HepG2 (cell line): ENCODE measurements at regions of chr1 and their contacts with region 1.

Region 1: GRCh38 chr1:22052115-22053016 is at the start of gene CDC42:
- DNase-seq: peak; percentile 91
- ATAC-seq: peak; percentile 94
- H3K4me3 ChIP-seq: peak within 1 kb of the TSS; percentile 81 to 90 (median 90)
- H3K27ac ChIP-seq: peak within 1 kb of the TSS; percentile 87
- H3K4me1 ChIP-seq: peaks cover 66% of the 10 kb centered on the region
- H3K27me3 ChIP-seq: no peaks in the 10 kb centered on the region; a peak in 1 of 5 replicates
- CTCF ChIP-seq: no peak
- EP300 ChIP-seq: peak in 1 of 2 experiments; percentile 61; a peak in 2 of 4 replicates
- POLR2A ChIP-seq: peak; percentile 91 to 97
- RAD21 ChIP-seq: no peak
- total RNA-seq, gene CDC42: 237 and 358 TPM in 2 replicates

Region 2: GRCh38 chr1:22025368-22026155 is 26.8 kb before region 1 on chr1:
- CTCF ChIA-PET with region 1: no interaction called
- POLR2A ChIA-PET with region 1: interaction called, 42 read pairs
- in situ Hi-C with region 1: no loop called
- intact Hi-C with region 1: no loop called
- DNase-seq: peak; percentile 89
- ATAC-seq: peak; percentile 96
- H3K4me3 ChIP-seq: peak overlapping the region; percentile 72 to 90 (median 87)
- H3K27ac ChIP-seq: peak overlapping the region; percentile 94
- H3K4me1 ChIP-seq: peaks cover 34% of the 10 kb centered on the region
- H3K27me3 ChIP-seq: no peaks in the 10 kb centered on the region; a peak in 1 of 5 replicates
- CTCF ChIP-seq: no peak
- EP300 ChIP-seq: peak in 1 of 2 experiments; percentile 19; a peak in 1 of 4 replicates
- POLR2A ChIP-seq: peak; percentile 82 to 86
- RAD21 ChIP-seq: no peak

Region 3: GRCh38 chr1:22039594-22040285 is 12.6 kb before region 1 on chr1:
- CTCF ChIA-PET with region 1: no interaction called
- POLR2A ChIA-PET with region 1: interaction called, 10 read pairs
- in situ Hi-C with region 1: no loop called
- intact Hi-C with region 1: no loop called
- DNase-seq: no peak
- ATAC-seq: peak; percentile 67
- H3K4me3 ChIP-seq: no peak overlapping the region
- H3K27ac ChIP-seq: no peak overlapping the region
- H3K4me1 ChIP-seq: peaks cover 37% of the 10 kb centered on the region
- H3K27me3 ChIP-seq: no peaks in the 10 kb centered on the region
- CTCF ChIP-seq: no peak
- EP300 ChIP-seq: no peak
- POLR2A ChIP-seq: no peak
- RAD21 ChIP-seq: no peak